ENCODE measurements at regions of chr18 and their contacts with region 1.

Region 1: DNA sequence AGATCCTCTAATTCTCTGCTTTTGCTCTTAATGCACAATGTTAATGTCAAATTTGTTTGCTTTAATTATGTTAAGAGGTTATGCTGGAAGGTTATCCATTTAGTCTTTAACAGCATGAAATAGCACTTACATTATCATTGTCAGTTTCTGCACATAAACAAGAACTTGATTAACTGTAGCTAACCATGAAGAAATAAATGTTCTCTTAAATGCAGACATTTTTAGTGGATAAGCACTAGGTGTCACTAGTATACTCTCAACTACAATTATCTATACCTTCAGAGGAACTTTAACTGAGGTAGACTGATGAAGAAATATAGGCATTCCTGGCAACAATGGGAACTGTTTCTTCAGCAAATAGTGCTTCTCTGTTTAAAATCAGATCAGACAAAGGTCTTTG is 178.8 kb upstream of the CHST9 start:
- DNase-seq: peak; percentile 16
- H3K4me3 ChIP-seq: no peak overlapping the region
- H3K27ac ChIP-seq: no peak overlapping the region
- H3K4me1 ChIP-seq: no peaks in the 10 kb centered on the region
- H3K27me3 ChIP-seq: no peaks in the 10 kb centered on the region
- CTCF ChIP-seq: peak; percentile 60
- EP300 ChIP-seq: no peak
- RAD21 ChIP-seq: peak; percentile 67

Region 2: DNA sequence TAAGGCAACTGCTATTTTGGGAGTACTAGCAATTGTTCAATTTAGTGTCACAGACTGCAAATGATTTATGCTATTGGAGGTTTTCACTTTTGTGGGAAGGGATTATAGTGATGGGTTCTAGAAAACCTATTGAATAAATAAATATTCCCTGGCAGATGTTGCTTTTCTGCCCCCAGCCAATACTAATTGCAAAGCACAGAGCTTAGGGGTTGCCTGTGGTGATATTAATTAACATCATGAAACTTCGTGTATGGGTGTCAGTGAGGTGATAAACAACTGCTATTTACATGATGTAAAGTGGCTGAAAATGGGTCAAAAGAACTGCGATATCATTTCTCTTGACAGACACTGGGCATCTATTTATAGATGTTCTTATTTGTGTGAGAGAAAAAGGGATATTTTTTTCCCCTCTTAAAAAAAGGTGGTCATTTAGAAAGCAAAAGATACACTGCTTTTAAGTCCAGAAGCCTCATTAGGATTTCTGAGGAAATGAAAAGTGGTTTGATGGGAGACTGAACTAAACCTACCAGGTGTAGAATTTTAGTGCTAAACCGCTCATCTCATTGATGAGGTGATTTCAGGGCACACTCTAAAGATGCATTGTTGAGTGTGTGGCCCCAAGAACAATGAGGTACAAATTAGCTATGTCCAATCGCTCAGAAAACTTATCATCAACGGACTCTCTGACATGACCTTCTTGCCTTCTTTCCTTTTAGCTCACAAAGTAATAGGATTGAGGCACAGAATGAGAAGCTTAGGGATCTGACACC is 62.1 kb before region 1 on chr18:
- CTCF ChIA-PET with region 1: no interaction called
- POLR2A ChIA-PET with region 1: no interaction called
- DNase-seq: no peak
- H3K4me3 ChIP-seq: no peak overlapping the region
- H3K27ac ChIP-seq: no peak overlapping the region
- H3K4me1 ChIP-seq: no peaks in the 10 kb centered on the region
- H3K27me3 ChIP-seq: no peaks in the 10 kb centered on the region
- CTCF ChIP-seq: no peak
- EP300 ChIP-seq: no peak
- RAD21 ChIP-seq: no peak

Region 3: GRCh38 chr18:27378431-27379095 is 14.7 kb after region 1 on chr18:
- CTCF ChIA-PET with region 1: interaction called, 13 read pairs
- POLR2A ChIA-PET with region 1: no interaction called
- DNase-seq: no peak
- H3K4me3 ChIP-seq: no peak overlapping the region
- H3K27ac ChIP-seq: 0 out of 4 replicates have a peak overlapping the region, but pooled peaks of 1 of the 2 experiments have one; percentile 23
- H3K4me1 ChIP-seq: peaks cover 0 to 7% of the 10 kb centered on the region in 2 experiments; a peak in 1 of 4 replicates
- H3K27me3 ChIP-seq: no peaks in the 10 kb centered on the region
- CTCF ChIP-seq: no peak
- EP300 ChIP-seq: 0 out of 4 replicates have a peak, but pooled peaks of 1 of the 2 experiments have one; percentile 31
- RAD21 ChIP-seq: no peak

Region 4: GRCh38 chr18:27665264-27665799 is 301.5 kb after region 1 on chr18:
- CTCF ChIA-PET with region 1: no interaction called
- POLR2A ChIA-PET with region 1: no interaction called
- DNase-seq: no peak
- H3K4me3 ChIP-seq: no peak overlapping the region
- H3K27ac ChIP-seq: no peak overlapping the region
- H3K4me1 ChIP-seq: no peaks in the 10 kb centered on the region
- H3K27me3 ChIP-seq: no peaks in the 10 kb centered on the region
- CTCF ChIP-seq: no peak
- EP300 ChIP-seq: no peak
- RAD21 ChIP-seq: no peak

Measured in SK-N-SH (cell line).